ENCODE measurements at regions of chr17 and their contacts with region 1.

Region 1: DNA sequence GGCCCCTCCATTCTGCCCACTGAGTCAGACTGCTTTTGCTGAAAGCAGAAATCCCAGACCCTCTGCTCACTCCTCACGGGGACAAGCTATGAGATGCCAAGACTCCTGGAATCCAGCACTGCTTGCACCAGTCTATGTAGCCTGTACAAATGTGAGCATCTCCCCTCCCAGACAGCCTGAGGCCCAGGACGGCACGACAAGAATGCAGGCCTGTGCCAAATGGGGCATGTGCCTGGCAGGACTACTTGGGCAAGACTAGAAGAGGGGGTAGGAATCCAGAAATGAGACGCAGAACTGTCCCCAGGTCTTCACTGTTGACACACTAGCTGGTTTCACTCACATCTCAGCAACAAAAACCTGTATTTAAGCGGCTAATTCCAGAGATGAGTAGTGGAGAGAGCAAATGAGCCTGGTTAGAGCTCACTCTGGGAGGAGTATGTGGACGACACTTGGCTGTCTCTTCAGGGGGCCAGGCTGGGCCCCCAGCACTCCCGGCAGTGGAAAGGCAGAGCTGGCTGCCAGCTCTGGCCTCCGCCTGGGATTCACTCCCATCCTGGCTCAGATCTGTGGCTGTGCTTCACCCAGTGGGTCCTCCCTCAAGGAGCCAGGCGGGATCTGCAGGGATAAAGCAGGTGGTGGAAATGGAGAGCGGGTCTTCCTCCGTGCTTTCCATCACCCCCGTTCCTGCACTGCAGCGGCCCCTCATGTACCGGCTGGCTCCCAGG is 2.9 kb upstream of the MYO1C start:
- DNase-seq: peak; percentile 17 to 37
- H3K4me3 ChIP-seq: no peak overlapping the region
- H3K27ac ChIP-seq: no peak overlapping the region
- H3K4me1 ChIP-seq: peaks cover 7% of the 10 kb centered on the region; the same call in 1 of the 2 replicates
- H3K27me3 ChIP-seq: no peaks in the 10 kb centered on the region
- CTCF ChIP-seq: no peak

Region 2: GRCh38 chr17:534071-534691 is 961.2 kb before region 1 on chr17:
- CTCF ChIA-PET with region 1: no interaction called
- POLR2A ChIA-PET with region 1: interaction called, 20 read pairs
- intact Hi-C with region 1: no loop called
- DNase-seq: no peak
- H3K4me3 ChIP-seq: no peak overlapping the region
- H3K27ac ChIP-seq: no peak overlapping the region
- H3K4me1 ChIP-seq: no peaks in the 10 kb centered on the region
- H3K27me3 ChIP-seq: no peaks in the 10 kb centered on the region
- CTCF ChIP-seq: no peak

Region 3: DNA sequence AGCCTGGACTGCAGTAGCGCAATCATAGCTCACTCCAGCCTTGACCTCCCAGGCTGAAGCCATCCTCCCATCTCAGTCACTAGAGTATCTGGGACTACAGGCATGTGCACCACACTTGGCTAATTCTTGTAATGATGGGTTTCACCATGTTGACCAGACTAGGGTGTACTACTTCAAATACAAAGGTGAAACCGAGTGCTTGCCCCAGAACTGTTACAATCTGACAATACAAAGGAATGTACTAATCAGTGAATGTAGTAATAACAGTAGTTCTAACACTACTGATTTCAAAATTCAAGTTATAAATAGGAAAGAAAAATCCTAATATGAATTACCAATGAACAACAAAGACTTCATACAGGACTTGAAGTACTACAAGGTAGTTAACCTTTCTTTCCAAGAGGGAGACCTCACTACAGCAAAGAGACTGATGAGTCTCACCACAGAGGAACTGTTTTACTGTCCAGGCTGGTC is 63.8 kb before region 1 on chr17:
- CTCF ChIA-PET with region 1: no interaction called
- POLR2A ChIA-PET with region 1: no interaction called
- intact Hi-C with region 1: no loop called
- DNase-seq: no peak
- H3K4me3 ChIP-seq: no peak overlapping the region
- H3K27ac ChIP-seq: no peak overlapping the region
- H3K4me1 ChIP-seq: no peaks in the 10 kb centered on the region
- H3K27me3 ChIP-seq: no peaks in the 10 kb centered on the region
- CTCF ChIP-seq: no peak

Region 4: GRCh38 chr17:1532836-1533602 is 37.6 kb after region 1 on chr17:
- CTCF ChIA-PET with region 1: no interaction called
- POLR2A ChIA-PET with region 1: interaction called, 19 read pairs
- intact Hi-C with region 1: no loop called
- DNase-seq: no peak
- H3K4me3 ChIP-seq: no peak overlapping the region
- H3K27ac ChIP-seq: no peak overlapping the region
- H3K4me1 ChIP-seq: no peaks in the 10 kb centered on the region
- H3K27me3 ChIP-seq: no peaks in the 10 kb centered on the region
- CTCF ChIP-seq: no peak

Region 5: DNA sequence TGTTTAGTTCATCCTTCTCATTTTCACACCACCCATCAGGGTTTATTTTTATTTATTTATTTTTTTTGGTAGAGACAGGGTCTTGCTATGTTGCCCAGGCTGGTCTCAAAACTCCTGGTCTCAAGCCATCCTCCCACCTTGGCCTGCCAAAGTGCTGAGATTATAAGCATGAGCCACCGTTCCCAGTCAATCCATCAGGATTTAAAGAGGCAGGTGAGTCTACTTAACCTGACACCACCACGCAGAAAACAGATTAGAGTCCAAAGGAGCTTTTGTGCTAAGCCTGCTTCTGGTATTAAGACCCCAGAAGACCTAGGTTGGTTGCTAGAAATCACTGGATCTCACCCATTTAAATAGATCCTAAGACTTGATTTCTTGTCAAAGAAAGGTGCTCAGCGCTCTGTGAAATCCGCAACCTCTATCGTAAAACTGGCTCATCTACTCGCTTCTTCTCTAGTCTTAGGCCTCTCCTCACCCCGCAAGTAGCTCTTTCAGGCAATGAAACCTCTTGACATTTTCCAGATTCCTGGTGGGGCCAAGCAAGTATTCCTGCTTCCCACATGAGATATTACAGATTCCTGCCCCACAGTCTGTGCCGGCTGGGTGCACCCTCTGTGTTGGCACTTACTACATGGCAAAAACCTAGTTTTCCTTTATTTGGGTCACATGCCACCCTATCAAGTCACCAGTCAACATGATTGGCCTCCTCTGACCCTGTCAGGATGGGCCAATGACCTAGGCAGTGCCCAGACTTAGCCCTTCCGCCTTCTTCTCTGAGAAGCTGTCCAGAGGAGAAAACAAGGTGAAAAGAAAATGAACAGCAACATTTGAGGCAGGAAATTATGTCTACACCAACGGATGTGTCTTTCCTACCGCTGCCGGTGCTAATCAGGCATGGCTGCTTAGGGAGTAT is 58.2 kb after region 1 on chr17:
- CTCF ChIA-PET with region 1: no interaction called
- POLR2A ChIA-PET with region 1: no interaction called
- intact Hi-C with region 1: no loop called
- DNase-seq: no peak
- H3K4me3 ChIP-seq: no peak overlapping the region
- H3K27ac ChIP-seq: no peak overlapping the region
- H3K4me1 ChIP-seq: no peaks in the 10 kb centered on the region
- H3K27me3 ChIP-seq: no peaks in the 10 kb centered on the region
- CTCF ChIP-seq: no peak